Endothelial cell of umbilical vein (primary cell): ENCODE measurements at regions of chr10 and their contacts with region 1.

Region 1: GRCh38 chr10:122112625-122113160 is 123.7 kb downstream of the TACC2 start:
- DNase-seq: peak; percentile 97
- H3K4me3 ChIP-seq: peak overlapping the region; percentile 49 to 59 (median 54)
- H3K27ac ChIP-seq: peak overlapping the region; percentile 100
- H3K4me1 ChIP-seq: peaks cover 42% of the 10 kb centered on the region
- H3K27me3 ChIP-seq: no peaks in the 10 kb centered on the region
- CTCF ChIP-seq: peak; percentile 43 to 53
- POLR2A ChIP-seq: peak; percentile 40

Region 2: DNA sequence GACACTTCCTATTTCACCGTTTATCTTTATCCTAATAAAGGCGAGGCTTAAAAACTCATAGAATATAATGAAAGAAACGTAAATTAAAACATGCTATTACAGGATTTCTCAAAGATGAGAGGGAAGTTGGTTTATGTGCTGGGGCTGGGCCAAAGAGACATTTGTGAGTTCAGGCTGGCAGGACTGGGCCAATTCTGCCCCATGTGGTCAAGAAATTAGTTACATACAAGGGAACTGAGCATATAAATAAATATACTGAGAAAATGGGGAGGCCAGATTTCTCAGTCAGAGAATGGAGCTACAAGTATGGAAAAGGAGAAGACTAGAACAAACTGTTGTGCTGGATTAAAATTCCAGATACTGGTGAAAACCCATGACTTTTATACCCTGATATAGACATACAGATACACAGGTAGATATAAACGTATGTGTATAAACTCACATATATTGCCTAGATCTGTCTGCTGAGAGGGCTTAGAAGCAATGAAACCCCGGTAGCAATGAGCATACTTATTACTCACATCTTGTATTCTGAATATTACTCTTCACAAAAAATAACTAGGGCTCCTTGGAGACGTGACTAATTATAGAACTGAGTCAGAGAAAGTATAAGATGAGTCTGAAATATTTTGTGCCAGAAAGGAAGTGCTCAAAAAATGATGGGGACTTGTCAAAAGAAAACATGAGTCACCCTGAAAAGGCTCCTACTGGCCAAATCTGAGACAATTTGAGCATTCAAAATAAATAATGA is 358.8 kb before region 1 on chr10:
- CTCF ChIA-PET with region 1: no interaction called
- POLR2A ChIA-PET with region 1: no interaction called
- dilution Hi-C with region 1: no loop called
- intact Hi-C with region 1: loop called (anchors 10 kb)
- DNase-seq: peak; percentile 88
- H3K4me3 ChIP-seq: peak overlapping the region in 1 of 3 experiments; percentile 40
- H3K27ac ChIP-seq: peak overlapping the region; percentile 90
- H3K4me1 ChIP-seq: peaks cover 17% of the 10 kb centered on the region
- H3K27me3 ChIP-seq: no peaks in the 10 kb centered on the region
- CTCF ChIP-seq: peak; percentile 22 to 29
- POLR2A ChIP-seq: no peak

Region 3: GRCh38 chr10:121974535-121975294 is 138.0 kb before region 1 on chr10 and contains the start of gene NSMCE4A:
- CTCF ChIA-PET with region 1: interaction called, 6 read pairs
- POLR2A ChIA-PET with region 1: no interaction called
- dilution Hi-C with region 1: no loop called
- intact Hi-C with region 1: loop called (anchors 1 kb)
- DNase-seq: peak; percentile 77
- H3K4me3 ChIP-seq: peak within 1 kb of the TSS; percentile 80 to 92 (median 85)
- H3K27ac ChIP-seq: peak within 1 kb of the TSS; percentile 81
- H3K4me1 ChIP-seq: peaks cover 10% of the 10 kb centered on the region
- H3K27me3 ChIP-seq: no peaks in the 10 kb centered on the region
- CTCF ChIP-seq: peak; percentile 73 to 87
- POLR2A ChIP-seq: peak; percentile 66
- total RNA-seq, gene NSMCE4A: 51.0 and 52.0 TPM in 2 replicates

Region 4: DNA sequence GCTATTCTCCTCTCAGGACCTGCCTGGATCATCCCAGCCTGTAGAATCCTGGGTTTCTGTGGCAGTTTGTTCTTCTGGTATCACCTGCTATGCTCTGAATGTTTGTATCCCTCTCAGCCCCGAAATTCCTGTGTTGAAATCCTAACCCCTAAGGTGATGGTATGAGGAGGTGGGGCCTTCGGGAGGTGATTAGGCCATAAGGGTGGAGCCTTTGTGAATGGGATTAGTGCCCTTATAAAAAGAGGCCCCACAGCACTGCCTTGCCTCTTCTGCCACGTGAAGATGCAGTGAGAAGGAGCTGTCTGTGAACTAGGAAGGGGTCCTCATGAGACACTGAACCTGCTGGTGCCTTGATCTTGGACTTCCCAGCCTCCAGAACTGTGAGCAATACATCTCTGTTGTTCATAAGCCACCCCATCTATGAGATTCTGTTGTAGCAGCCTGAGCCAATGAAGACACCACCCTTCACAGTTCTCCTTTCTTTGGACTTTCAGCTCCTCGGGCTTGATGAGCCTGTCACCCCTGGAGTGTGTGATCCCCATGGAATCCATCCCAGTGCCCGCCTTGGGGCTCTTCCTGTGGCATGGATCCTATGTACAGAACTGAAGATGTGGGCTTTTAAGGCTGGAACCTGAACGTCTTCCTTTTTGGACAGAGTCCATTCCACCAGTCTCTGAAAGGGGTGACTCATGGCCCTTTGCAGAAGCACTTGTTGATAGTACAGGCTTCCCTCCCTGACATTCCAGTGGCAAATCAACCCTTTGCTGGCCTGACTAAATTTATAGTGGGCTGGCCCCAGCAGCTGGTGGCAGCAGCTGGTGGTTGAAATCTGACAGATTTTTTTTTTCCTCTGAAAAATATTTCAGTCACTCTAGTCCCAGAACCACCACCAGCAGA is 14.3 kb after region 1 on chr10:
- CTCF ChIA-PET with region 1: interaction called, 15 read pairs
- POLR2A ChIA-PET with region 1: interaction called, 5 read pairs
- dilution Hi-C with region 1: no loop called
- intact Hi-C with region 1: loop called (anchors 1 kb)
- DNase-seq: peak; percentile 92
- H3K4me3 ChIP-seq: no peak overlapping the region
- H3K27ac ChIP-seq: peak overlapping the region; percentile 77
- H3K4me1 ChIP-seq: peaks cover 23% of the 10 kb centered on the region
- H3K27me3 ChIP-seq: no peaks in the 10 kb centered on the region
- CTCF ChIP-seq: no peak
- POLR2A ChIP-seq: no peak

Region 5: GRCh38 chr10:122307669-122308486 is 195.2 kb after region 1 on chr10:
- CTCF ChIA-PET with region 1: no interaction called
- POLR2A ChIA-PET with region 1: no interaction called
- dilution Hi-C with region 1: no loop called
- intact Hi-C with region 1: loop called (anchors 1 kb)
- DNase-seq: peak; percentile 99
- H3K4me3 ChIP-seq: peak overlapping the region in 1 of 3 experiments; percentile 55
- H3K27ac ChIP-seq: peak overlapping the region; percentile 93
- H3K4me1 ChIP-seq: peaks cover 44% of the 10 kb centered on the region
- H3K27me3 ChIP-seq: no peaks in the 10 kb centered on the region
- CTCF ChIP-seq: no peak
- POLR2A ChIP-seq: no peak